ENCODE measurements at regions of chr19 and their contacts with region 1.

Region 1: DNA sequence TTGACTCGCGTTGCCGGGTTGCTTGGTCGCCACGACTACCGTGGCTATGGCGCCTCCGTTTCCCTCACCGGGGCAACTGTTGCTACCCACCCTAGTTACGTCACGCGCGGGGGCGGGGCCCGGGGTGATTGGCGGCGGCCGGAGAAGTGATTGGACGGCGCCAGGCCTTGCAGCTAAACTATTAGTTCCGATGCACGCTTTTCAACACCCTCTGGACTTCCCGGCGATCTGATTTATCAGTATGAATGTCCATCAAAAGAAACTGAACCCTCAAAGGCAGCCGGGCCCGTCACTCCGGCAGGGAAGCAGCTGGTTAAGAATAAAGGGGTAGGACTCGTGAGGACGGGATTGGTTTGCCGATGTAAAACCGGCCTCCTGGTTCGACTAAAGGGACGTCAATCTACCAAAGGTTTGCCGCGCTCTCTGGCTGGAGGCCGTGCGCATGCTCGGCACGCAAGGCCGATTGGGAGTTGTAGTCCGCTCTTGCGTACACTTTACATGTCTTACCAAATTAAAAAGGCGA is at the start of gene RFX1:
- DNase-seq: peak; percentile 98 to 100 (median 100)

Region 2: GRCh38 chr19:13952154-13953035 is 53.9 kb before region 1 on chr19 and contains the start of gene DCAF15:
- intact Hi-C with region 1: loop called (anchors 10 kb)
- DNase-seq: peak; percentile 97 to 100 (median 100)

Region 3: GRCh38 chr19:14073261-14073924 is 67.1 kb after region 1 on chr19:
- intact Hi-C with region 1: loop called (anchors 10 kb)
- DNase-seq: peak; percentile 35 to 88 (median 76)